CD4-positive, alpha-beta memory T cell (primary cell): ENCODE measurements at regions of chr6 and their contacts with region 1.

Region 1: DNA sequence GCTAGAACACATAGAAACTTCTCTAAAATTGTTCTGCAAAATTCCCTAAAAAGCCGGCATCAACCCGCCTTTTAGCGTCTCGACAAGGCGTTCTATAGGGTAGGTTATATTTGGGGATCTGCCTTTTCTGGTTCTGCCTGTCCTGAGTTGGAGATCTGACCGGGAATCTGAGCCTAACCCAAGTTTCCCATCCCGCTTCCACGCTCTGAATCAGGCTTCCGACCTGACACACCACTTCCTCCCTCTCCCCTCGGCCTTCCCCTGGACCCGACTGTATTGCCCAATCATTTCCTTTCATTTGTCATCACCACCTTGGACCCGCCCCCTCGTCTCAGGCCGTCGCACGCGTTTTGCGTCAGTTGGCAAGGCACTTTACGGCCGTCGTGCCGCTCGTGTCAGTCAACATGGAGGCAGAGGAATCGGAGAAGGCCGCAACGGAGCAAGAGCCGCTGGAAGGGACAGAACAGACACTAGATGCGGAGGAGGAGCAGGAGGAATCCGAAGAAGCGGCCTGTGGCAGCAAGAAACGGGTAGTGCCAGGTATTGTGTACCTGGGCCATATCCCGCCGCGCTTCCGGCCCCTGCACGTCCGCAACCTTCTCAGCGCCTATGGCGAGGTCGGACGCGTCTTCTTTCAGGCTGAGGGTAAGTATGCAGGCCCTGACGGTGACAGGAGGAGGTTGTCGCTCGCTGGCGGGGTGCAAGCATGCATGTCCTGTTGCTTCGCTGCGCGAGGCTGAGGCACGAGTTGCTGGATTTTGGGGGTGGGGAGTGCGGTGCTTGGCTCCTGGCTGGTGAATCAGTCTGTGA is at the start of gene ABT1:
- DNase-seq: peak; percentile 95 to 98 (median 96)
- H3K4me3 ChIP-seq: peak within 1 kb of the TSS; percentile 76 to 98
- H3K4me3 Mint-ChIP-seq: no peak within 1 kb of the TSS
- H3K27ac ChIP-seq: peak within 1 kb of the TSS; percentile 91
- H3K27ac Mint-ChIP-seq: peak within 1 kb of the TSS in 3 of 7 donors; percentile 80 to 92 (median 88)
- H3K4me1 ChIP-seq: peaks cover 24% of the 10 kb centered on the region
- H3K4me1 Mint-ChIP-seq: peaks cover 0 to 16% (median 8%) of the 10 kb centered on the region in 4 donors
- H3K27me3 ChIP-seq: no peaks in the 10 kb centered on the region
- H3K27me3 Mint-ChIP-seq: peaks cover 15 to 22% of the 10 kb centered on the region in 2 donors
- total RNA-seq, gene ABT1: 33.5 to 34.8 TPM

Region 2: DNA sequence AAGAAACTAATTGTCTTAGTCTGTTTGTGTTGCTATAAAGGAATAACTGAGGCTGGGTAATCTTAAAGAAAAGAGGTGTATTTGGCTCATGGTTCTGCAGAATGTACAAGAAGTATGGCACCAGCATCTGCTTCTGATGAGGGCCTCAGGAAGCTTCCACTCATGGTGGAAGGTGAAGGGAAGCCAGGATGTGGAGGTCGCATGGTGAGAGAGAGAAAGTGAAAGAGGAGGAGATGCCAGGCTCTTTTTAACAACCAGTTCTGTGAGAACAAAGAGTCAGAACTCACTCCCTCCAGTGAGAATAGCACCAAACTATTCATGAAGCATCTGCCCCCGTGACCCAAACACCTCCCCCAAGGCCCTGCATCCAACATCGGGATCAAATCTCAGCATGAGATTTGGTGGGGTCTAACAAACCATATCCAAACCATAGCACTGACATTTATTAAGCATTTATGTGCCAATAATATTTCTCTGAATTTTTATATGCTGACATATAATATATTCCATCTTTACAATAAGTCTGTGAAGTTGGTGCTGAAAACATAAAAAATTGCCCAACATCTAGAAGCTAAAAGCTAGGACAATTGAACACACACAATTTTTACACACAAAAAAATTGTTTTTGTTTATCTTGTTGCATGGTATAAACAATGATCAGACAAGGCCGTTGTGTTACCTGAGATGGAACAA is 261.0 kb before region 1 on chr6:
- CTCF ChIA-PET with region 1: interaction called, 114 read pairs
- POLR2A ChIA-PET with region 1: interaction called, 7 read pairs
- intact Hi-C with region 1: no loop called
- DNase-seq: no peak
- H3K4me3 ChIP-seq: no peak overlapping the region
- H3K4me3 Mint-ChIP-seq: no peak overlapping the region
- H3K27ac ChIP-seq: no peak overlapping the region
- H3K27ac Mint-ChIP-seq: peak overlapping the region in 1 of 7 donors; percentile 8
- H3K4me1 ChIP-seq: peaks cover 20% of the 10 kb centered on the region
- H3K4me1 Mint-ChIP-seq: peaks cover 22 to 36% (median 29%) of the 10 kb centered on the region in 4 donors
- H3K27me3 ChIP-seq: peaks cover 7% of the 10 kb centered on the region
- H3K27me3 Mint-ChIP-seq: peaks cover 7 to 11% of the 10 kb centered on the region in 2 donors

Region 3: DNA sequence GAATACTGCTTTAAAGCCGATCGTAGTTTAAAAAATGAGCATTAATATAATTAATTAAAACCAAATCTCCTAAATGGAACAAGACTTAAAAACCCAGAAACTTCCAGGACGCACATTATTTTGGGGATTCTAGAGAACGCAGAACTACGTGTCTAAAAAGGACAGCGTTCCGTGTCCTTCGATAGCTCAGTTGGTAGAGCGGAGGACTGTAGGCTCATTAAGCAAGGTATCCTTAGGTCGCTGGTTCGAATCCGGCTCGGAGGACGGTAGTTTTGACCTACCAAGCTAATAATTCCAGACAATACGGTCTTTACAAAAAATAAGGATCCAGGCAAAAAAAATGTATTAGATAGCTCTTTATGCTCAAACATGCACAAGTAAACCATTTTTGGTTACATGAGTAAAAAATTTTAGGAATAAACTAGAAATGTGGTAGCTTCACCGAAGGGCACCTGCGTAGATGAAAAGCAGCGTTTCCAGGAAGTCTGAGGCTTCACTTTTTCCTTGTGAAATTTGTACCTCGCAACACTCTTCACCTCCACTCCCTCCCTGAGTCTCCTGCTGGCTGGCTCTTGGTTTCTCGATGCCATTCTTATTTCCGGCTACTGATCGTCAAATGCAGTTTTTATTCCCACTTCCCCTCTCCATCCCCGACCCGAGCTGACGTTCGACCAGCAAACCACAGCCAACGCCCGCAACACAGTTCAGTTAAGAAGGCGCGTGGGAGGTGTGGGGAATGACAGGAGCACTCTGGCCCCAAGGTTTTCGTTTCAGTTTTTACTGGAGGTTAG is 19.7 kb before region 1 on chr6:
- CTCF ChIA-PET with region 1: interaction called, 116 read pairs
- POLR2A ChIA-PET with region 1: interaction called, 8 read pairs
- intact Hi-C with region 1: loop called (anchors 1 kb)
- DNase-seq: peak; percentile 53 to 70 (median 56)
- H3K4me3 ChIP-seq: peak overlapping the region; percentile 38 to 71
- H3K4me3 Mint-ChIP-seq: peak overlapping the region; percentile 79 to 93 (median 90)
- H3K27ac ChIP-seq: no peak overlapping the region
- H3K27ac Mint-ChIP-seq: peak overlapping the region; percentile 62 to 97 (median 89)
- H3K4me1 ChIP-seq: peaks cover 18% of the 10 kb centered on the region
- H3K4me1 Mint-ChIP-seq: peaks cover 9 to 32% (median 21%) of the 10 kb centered on the region in 4 donors
- H3K27me3 ChIP-seq: no peaks in the 10 kb centered on the region
- H3K27me3 Mint-ChIP-seq: peaks cover 2 to 3% of the 10 kb centered on the region in 2 donors

Region 4: GRCh38 chr6:26662642-26663041 is 65.9 kb after region 1 on chr6:
- CTCF ChIA-PET with region 1: no interaction called
- POLR2A ChIA-PET with region 1: no interaction called
- intact Hi-C with region 1: no loop called
- DNase-seq: no peak
- H3K4me3 ChIP-seq: no peak overlapping the region
- H3K4me3 Mint-ChIP-seq: no peak overlapping the region
- H3K27ac ChIP-seq: no peak overlapping the region
- H3K27ac Mint-ChIP-seq: no peak overlapping the region
- H3K4me1 ChIP-seq: peaks cover 17% of the 10 kb centered on the region
- H3K4me1 Mint-ChIP-seq: peaks cover 10 to 21% (median 14%) of the 10 kb centered on the region in 4 donors
- H3K27me3 ChIP-seq: peaks cover 7% of the 10 kb centered on the region
- H3K27me3 Mint-ChIP-seq: peaks cover 31 to 35% of the 10 kb centered on the region in 2 donors